WTC11 (cell line): ENCODE measurements at regions of chr13 and their contacts with region 1.

Region 1: DNA sequence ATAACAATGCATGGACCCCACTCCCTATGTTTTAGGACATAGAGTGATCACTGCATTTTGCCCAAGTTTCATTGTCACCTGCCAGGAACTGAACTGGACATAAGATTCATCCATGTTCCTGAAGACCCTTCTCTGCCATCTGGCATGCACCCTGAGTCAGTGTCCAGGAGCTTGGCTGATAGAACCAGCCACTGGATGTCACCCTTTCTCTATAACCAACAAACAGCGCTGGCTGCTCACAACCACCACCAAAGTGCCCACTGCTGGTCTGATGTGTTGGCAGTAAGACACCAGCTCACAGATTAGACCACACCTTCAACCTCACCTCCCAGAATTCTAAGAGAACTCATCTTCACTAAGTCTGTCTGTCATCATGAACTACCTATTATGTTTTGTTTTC is 333.4 kb downstream of the ITGBL1 start:
- DNase-seq: peak; percentile 58
- ATAC-seq: peak; percentile 100
- H3K4me3 Mint-ChIP-seq: no peak overlapping the region
- H3K27ac Mint-ChIP-seq: no peak overlapping the region
- H3K4me1 Mint-ChIP-seq: peaks cover 7% of the 10 kb centered on the region
- H3K27me3 Mint-ChIP-seq: no peaks in the 10 kb centered on the region; the same call in 1 of the 2 replicates
- CTCF ChIP-seq: no peak

Region 2: DNA sequence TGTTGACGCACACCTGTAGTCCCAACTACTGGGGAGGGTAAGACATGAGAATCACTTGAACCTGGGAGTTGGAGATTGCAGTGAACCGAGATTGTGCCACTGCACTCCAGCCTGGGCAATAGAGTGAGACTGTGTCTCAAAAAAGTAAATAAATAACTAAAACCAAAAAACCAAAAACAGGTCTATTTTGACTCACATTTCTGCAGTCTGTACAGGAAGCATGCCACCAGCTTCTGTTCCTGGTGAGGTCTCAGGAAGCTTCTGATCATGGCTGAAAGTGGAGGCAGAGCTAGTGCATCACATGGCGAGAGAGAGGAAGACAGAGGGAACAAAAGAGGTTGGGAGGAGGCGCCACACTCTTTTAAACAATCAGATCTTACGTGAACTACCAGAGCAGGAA is 190.9 kb before region 1 on chr13:
- CTCF ChIA-PET with region 1: no interaction called
- POLR2A ChIA-PET with region 1: no interaction called
- DNase-seq: no peak
- ATAC-seq: no peak
- H3K4me3 Mint-ChIP-seq: no peak overlapping the region
- H3K27ac Mint-ChIP-seq: no peak overlapping the region
- H3K4me1 Mint-ChIP-seq: no peaks in the 10 kb centered on the region
- H3K27me3 Mint-ChIP-seq: no peaks in the 10 kb centered on the region
- CTCF ChIP-seq: no peak

Region 3: GRCh38 chr13:101919541-101920181 is 133.8 kb after region 1 on chr13:
- CTCF ChIA-PET with region 1: interaction called, 21 read pairs
- POLR2A ChIA-PET with region 1: no interaction called
- DNase-seq: peak; percentile 78
- ATAC-seq: peak; percentile 50
- H3K4me3 Mint-ChIP-seq: peak overlapping the region; percentile 62
- H3K27ac Mint-ChIP-seq: no peak overlapping the region
- H3K4me1 Mint-ChIP-seq: peaks cover 32% of the 10 kb centered on the region
- H3K27me3 Mint-ChIP-seq: peaks cover 64% of the 10 kb centered on the region
- CTCF ChIP-seq: no peak

Region 4: GRCh38 chr13:101942038-101942437 is 156.2 kb after region 1 on chr13:
- CTCF ChIA-PET with region 1: interaction called, 32 read pairs
- POLR2A ChIA-PET with region 1: no interaction called
- DNase-seq: peak; percentile 33
- ATAC-seq: peak; percentile 89
- H3K4me3 Mint-ChIP-seq: no peak overlapping the region
- H3K27ac Mint-ChIP-seq: no peak overlapping the region
- H3K4me1 Mint-ChIP-seq: 0 out of 2 replicates have a peak, but pooled peaks cover 3% of the 10 kb centered on the region
- H3K27me3 Mint-ChIP-seq: no peaks in the 10 kb centered on the region
- CTCF ChIP-seq: 0 out of 2 replicates have a peak, but pooled peaks have one; percentile 33